OCI-LY7 (cell line): ENCODE measurements at regions of chr11 and their contacts with region 1.

Region 1: DNA sequence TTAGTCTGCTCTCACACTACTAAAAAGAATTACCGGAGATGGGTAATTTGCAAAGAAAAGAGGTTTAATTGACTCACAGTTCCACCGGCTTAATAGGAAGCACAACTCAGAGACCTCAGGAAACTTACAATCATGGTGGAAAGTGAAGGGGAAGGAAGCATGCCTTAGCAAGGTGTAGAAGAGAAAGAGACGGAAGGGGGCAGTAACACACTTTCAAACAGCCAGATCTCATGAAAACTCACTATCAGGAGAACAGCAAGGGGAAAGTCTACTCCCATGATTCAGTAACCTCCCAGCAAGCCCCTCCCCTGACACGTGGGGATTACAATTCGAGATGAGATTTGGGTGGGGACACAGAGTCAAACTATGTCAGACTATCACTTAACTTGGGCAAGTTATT is 236.6 kb upstream of the ANO3 start:
- DNase-seq: no peak
- H3K4me3 ChIP-seq: no peak overlapping the region
- H3K27ac ChIP-seq: no peak overlapping the region
- H3K4me1 ChIP-seq: peaks cover 38% of the 10 kb centered on the region
- CTCF ChIP-seq: no peak

Region 2: GRCh38 chr11:26078217-26078821 is 17.0 kb before region 1 on chr11:
- CTCF ChIA-PET with region 1: interaction called, 4 read pairs
- POLR2A ChIA-PET with region 1: interaction called, 20 read pairs
- intact Hi-C with region 1: no loop called
- DNase-seq: no peak
- H3K4me3 ChIP-seq: no peak overlapping the region
- H3K27ac ChIP-seq: peak overlapping the region; percentile 26
- H3K4me1 ChIP-seq: peaks cover 14% of the 10 kb centered on the region
- CTCF ChIP-seq: no peak

Region 3: DNA sequence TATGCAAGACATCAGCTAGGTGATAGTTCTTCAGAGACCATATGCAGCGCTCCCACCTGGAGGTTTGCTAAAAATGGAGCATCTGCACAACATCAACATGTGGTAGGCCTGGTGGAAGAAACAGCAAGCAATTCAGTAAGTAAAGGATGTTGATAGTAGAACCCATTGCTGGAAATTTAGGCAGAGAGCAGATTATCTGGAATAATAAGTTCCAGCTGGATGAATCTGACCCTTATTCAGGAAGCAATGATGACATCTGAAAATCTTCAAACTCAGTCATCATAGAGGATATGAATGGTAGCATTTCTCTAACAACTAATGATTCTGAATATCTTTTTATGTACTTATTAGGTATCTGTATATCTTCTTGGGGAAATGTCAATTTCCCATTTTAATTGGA is 11.4 kb after region 1 on chr11:
- CTCF ChIA-PET with region 1: no interaction called
- POLR2A ChIA-PET with region 1: interaction called, 17 read pairs
- intact Hi-C with region 1: no loop called
- DNase-seq: peak; percentile 58
- H3K4me3 ChIP-seq: peak overlapping the region; percentile 4
- H3K27ac ChIP-seq: peak overlapping the region; percentile 57
- H3K4me1 ChIP-seq: peaks cover 51% of the 10 kb centered on the region
- CTCF ChIP-seq: peak; percentile 31; the same call in 1 of the 2 replicates